RWPE1 (cell line): ENCODE measurements at regions of chr20 and their contacts with region 1.

Region 1: GRCh38 chr20:56343861-56344381 is 14.9 kb upstream of the FAM210B start:
- DNase-seq: peak; percentile 68
- H3K27ac ChIP-seq: no peak overlapping the region
- CTCF ChIP-seq: peak; percentile 96

Region 2: DNA sequence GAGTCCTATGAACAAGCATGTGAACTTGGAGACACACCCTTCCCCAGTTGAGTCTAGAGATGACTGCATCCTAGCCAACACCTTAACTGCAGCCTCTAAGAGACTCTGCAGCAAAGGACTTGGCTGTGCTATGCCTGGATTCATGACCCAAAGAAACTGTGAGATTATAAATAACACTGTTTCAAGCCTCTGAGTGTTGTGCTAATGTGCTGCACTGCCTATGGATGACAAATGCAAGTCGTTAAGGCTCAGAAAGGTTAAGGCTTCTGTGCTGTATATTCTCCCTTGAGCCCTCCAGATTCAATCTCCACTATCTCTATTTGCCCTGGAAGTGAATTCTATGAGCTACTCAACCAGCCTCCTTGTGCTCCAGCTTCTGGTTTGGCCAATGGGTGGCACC is 222.1 kb before region 1 on chr20:
- CTCF ChIA-PET with region 1: no interaction called
- POLR2A ChIA-PET with region 1: no interaction called
- DNase-seq: no peak
- H3K27ac ChIP-seq: no peak overlapping the region
- CTCF ChIP-seq: no peak

Region 3: GRCh38 chr20:56187534-56188198 is 156.3 kb before region 1 on chr20:
- CTCF ChIA-PET with region 1: interaction called, 16 read pairs
- POLR2A ChIA-PET with region 1: no interaction called
- DNase-seq: peak; percentile 36
- H3K27ac ChIP-seq: no peak overlapping the region
- CTCF ChIP-seq: peak; percentile 81

Region 4: DNA sequence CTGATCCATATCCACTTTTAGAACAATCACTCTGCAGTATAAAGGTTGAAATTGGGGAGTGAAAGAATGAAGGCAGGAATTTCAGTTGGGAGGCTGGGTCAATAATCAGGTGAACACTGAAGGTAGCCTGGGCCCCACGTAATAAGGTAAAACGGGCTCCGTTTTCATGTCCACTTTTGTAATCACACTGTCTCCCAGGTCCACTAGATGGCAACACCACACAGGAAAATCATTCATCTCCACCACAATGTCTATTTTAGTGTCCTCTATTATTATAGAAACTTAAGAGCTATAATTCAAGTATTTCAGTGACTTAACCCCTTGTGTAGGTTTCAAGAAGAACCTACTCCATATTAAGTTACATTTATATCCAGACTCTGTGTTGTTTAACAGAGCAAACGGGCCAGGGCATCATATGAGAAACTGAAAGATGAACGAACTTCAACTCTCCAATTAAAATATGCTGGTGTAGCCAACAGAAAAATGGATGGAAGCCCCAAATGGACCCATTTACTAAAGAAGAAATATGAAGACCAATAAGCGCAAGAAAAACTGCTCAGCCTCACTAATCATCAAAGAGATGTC is 141.3 kb before region 1 on chr20:
- CTCF ChIA-PET with region 1: interaction called, 20 read pairs
- POLR2A ChIA-PET with region 1: no interaction called
- DNase-seq: peak; percentile 76
- H3K27ac ChIP-seq: no peak overlapping the region
- CTCF ChIP-seq: peak; percentile 93

Region 5: GRCh38 chr20:56247948-56248782 is 95.8 kb before region 1 on chr20 and contains the start of gene MC3R:
- CTCF ChIA-PET with region 1: interaction called, 13 read pairs
- POLR2A ChIA-PET with region 1: no interaction called
- DNase-seq: peak; percentile 75
- H3K27ac ChIP-seq: no peak within 1 kb of the TSS
- CTCF ChIP-seq: peak; percentile 87

Region 6: DNA sequence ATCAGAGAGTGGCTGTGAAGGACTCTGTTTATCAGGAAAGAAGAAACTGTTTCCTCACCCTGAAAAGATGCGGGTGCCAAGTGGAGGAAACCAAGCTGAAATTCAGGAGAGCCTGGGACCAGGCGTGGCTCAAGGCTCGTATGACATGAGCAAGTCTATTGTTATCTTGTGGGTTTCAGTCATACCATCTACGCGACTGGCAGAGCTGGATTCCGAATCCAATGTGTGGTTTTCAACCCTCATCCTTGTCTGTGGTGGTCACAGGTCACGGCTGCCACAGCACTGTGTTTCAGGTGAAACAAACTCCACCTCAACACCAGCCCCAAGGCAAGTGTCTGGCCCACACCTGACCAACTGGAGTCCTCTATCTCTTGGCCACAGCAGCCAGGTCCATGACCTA is 86.3 kb before region 1 on chr20:
- CTCF ChIA-PET with region 1: interaction called, 10 read pairs
- POLR2A ChIA-PET with region 1: no interaction called
- DNase-seq: no peak
- H3K27ac ChIP-seq: no peak overlapping the region
- CTCF ChIP-seq: no peak

Region 7: DNA sequence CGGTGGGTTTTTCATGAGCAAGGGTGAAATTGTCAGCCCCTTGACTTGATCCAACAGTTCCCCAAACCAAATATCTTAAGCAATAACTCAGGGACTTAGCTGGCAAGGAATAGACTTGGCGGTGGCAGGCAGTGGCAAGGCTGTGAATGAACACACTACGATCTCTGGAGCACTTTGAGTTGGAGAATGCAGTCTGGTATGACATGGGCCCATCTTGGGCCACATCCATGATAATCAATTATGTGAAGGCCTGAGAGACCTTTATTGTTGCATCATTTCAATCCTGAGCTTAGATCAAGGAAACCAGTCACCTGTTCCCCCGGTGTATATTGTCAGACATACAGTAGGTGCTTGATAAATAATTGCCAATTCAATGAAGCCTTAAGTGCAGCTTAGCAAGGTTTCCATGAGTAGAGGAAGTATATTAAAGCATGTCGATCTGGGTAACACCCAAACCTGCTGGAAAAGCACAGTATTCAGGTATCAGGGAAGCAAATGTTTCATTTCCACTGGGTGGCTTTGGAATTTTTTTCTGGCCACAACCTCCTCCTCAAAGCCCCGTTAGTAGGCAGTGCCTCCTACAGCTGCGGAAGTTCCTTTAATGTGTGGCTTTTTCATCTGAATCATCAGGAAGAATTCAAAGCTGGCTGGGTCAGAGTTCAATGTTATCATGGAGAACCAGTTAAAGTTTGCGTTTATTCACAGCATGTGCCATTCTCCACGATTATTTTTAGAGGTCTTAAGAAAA is 78.3 kb after region 1 on chr20:
- CTCF ChIA-PET with region 1: no interaction called
- POLR2A ChIA-PET with region 1: no interaction called
- DNase-seq: peak; percentile 49
- H3K27ac ChIP-seq: no peak overlapping the region
- CTCF ChIP-seq: no peak

Region 8: DNA sequence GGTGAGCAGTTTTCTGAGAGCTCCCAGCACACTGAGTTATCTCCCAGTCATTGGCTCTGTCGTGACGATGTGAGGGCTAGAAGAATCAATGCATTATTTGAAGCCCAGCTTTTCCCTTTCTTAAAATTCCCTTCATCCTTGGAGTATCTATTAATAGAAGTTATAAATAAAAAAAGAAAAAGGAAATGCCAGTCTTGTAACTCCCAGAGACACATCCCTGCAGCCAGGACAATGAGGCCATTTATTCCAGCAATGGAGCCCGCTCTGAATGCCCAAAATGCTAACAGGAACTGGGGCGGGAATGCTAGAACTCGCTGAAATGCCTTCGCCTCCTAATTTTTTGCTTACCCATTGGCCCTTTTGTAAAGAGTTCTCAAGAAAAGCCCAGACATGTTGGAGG is 591.0 kb after region 1 on chr20:
- CTCF ChIA-PET with region 1: no interaction called
- POLR2A ChIA-PET with region 1: no interaction called
- DNase-seq: no peak
- H3K27ac ChIP-seq: no peak overlapping the region
- CTCF ChIP-seq: no peak